Right ventricle myocardium superior (tissue), 1 donor: ENCODE measurements at regions of chr6 and their contacts with region 1.

Region 1: DNA sequence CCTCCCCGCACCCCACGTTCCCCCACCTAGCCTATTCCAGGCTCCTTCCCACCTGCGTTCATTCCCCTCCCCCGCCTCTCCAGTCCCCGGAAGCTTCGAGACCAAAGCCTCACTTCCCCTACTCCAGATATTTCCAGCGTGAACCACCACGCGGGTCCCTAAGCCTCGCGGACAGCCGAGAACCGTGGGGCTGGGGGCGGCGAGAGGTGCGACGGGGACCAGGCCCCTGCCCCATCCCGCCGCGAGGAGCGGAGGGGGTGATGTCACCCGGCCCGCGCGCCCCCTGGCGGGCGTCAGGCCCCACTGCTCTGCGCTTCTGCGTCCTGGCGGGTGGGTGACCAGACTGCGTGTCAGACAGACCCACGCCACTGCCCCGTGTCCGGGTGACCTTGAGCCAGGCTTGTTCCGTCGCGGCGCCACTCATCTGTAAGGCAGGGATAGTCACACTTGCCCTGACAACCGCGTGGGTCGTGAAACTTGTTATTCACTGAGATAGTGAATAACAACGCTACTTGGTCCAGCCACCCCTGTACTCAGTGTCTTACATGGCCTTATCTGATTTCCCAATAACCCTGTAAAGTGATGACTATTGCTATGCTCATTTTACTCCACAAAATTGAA is 9.0 kb upstream of the HSP90AB1 start:
- DNase-seq: peak; percentile 87
- ATAC-seq: peak; percentile 83

Region 2: GRCh38 chr6:44127186-44128019 is 110.5 kb before region 1 on chr6 and contains the starts of genes MRPL14 and TMEM63B:
- intact Hi-C with region 1: no loop called
- DNase-seq: peak; percentile 93
- ATAC-seq: peak; percentile 97
- total RNA-seq, gene MRPL14: 41.0 TPM
- total RNA-seq, gene TMEM63B: 46.3 TPM

Region 3: GRCh38 chr6:44172731-44173500 is 65.0 kb before region 1 on chr6:
- intact Hi-C with region 1: loop called (anchors 5 kb)
- DNase-seq: peak; percentile 92
- ATAC-seq: peak; percentile 96

Region 4: GRCh38 chr6:44312901-44313788 is 75.2 kb after region 1 on chr6 and contains the start of gene AARS2:
- intact Hi-C with region 1: no loop called
- DNase-seq: peak; percentile 93
- ATAC-seq: peak; percentile 95
- total RNA-seq, gene AARS2: 10.7 TPM